Activated T-helper 1 cell treated with anti-CD3 and anti-CD28 coated beads, Interleukin-12 subunit alpha, Interleukin-12 subunit beta, Interleukin-2, Interleukin-4 antibody, amounts not matched to agents 30 ng/mL and 10 ng/mL and 1 ng/mL, durations not matched to agents 14 hours and 24 hours and 36 hours (primary cell): ENCODE measurements at regions of chr2 and their contacts with region 1.

Region 1: GRCh38 chr2:111982822-111983221 is 72.2 kb upstream of the TMEM87B start:
- DNase-seq: no peak
- H3K4me3 Mint-ChIP-seq: no peak overlapping the region
- H3K27ac Mint-ChIP-seq: peak overlapping the region; percentile 83
- H3K4me1 Mint-ChIP-seq: peaks cover 9% of the 10 kb centered on the region
- H3K27me3 Mint-ChIP-seq: peaks cover 8% of the 10 kb centered on the region

Region 2: DNA sequence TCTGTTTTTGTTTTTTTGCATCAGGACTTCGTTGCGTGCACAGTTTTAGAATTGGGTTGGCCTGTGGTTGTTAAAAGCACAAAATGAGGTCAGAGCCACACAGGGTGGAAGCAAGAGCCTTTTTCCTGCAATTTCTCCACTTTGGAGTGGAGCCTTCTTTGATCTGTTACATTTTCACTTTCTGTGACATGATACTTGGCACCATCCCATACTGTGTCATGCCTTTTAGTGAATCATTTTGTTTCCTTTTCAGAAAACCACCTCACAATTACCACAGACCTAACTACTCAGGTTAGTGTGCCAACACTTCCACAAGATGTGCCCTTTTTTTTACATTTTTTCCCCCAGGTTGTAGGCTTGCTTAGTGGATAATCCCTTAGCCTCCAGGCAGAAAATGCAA is 51.9 kb before region 1 on chr2:
- intact Hi-C with region 1: loop called (anchors 1 kb)
- DNase-seq: peak; percentile 16
- H3K4me3 Mint-ChIP-seq: peak overlapping the region; percentile 13
- H3K27ac Mint-ChIP-seq: peak overlapping the region; percentile 46
- H3K4me1 Mint-ChIP-seq: peaks cover 17% of the 10 kb centered on the region
- H3K27me3 Mint-ChIP-seq: peaks cover 8% of the 10 kb centered on the region

Region 3: GRCh38 chr2:111952871-111953452 is 29.9 kb before region 1 on chr2:
- intact Hi-C with region 1: loop called (anchors 2 kb)
- DNase-seq: no peak
- H3K4me3 Mint-ChIP-seq: no peak overlapping the region
- H3K27ac Mint-ChIP-seq: no peak overlapping the region
- H3K4me1 Mint-ChIP-seq: peaks cover 9% of the 10 kb centered on the region
- H3K27me3 Mint-ChIP-seq: peaks cover 18% of the 10 kb centered on the region